Activated naive CD4-positive, alpha-beta T cell treated with anti-CD3 and anti-CD28 coated beads for 36 hours (primary cell): ENCODE measurements at regions of chr5 and their contacts with region 1.

Region 1: GRCh38 chr5:158695595-158696330 is 404.0 kb downstream of the EBF1 start:
- DNase-seq: peak; percentile 78
- H3K4me3 Mint-ChIP-seq: no peak overlapping the region
- H3K27ac Mint-ChIP-seq: no peak overlapping the region
- H3K4me1 Mint-ChIP-seq: peaks cover 2% of the 10 kb centered on the region
- H3K27me3 Mint-ChIP-seq: no peaks in the 10 kb centered on the region

Region 2: GRCh38 chr5:158174918-158175851 is 520.6 kb before region 1 on chr5:
- CTCF ChIA-PET with region 1: interaction called, 12 read pairs
- intact Hi-C with region 1: loop called (anchors 1 kb)
- DNase-seq: peak; percentile 75
- H3K4me3 Mint-ChIP-seq: no peak overlapping the region
- H3K27ac Mint-ChIP-seq: no peak overlapping the region
- H3K4me1 Mint-ChIP-seq: no peaks in the 10 kb centered on the region
- H3K27me3 Mint-ChIP-seq: no peaks in the 10 kb centered on the region

Region 3: DNA sequence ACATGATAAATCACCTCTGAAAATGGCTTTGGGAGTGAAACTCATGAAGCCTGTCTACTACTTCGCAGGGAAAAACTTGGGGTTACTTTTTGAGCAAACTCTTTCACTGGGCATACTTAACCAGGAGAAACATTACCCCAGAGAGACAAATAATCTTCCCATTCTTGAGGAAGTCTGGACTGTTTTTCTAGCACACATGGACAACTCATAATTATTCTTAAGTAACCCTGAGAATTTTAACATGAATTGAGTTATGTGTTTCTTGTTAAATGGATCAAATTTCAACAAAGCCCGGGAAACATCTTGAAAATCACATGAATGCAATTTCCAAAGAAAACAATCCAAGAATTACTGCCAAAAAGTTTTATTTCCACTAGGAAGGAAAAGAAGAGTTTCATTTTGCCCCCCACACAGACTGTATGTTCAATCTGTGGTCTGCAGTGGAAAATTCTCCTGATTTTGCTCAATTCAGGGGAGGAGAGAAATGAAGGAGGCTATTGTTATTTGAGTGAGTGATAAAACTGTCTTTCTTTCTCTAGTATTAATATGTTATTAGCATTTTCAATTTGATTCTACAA is 272.1 kb before region 1 on chr5:
- CTCF ChIA-PET with region 1: no interaction called
- intact Hi-C with region 1: no loop called
- DNase-seq: no peak
- H3K4me3 Mint-ChIP-seq: no peak overlapping the region
- H3K27ac Mint-ChIP-seq: no peak overlapping the region
- H3K4me1 Mint-ChIP-seq: no peaks in the 10 kb centered on the region
- H3K27me3 Mint-ChIP-seq: no peaks in the 10 kb centered on the region

Region 4: DNA sequence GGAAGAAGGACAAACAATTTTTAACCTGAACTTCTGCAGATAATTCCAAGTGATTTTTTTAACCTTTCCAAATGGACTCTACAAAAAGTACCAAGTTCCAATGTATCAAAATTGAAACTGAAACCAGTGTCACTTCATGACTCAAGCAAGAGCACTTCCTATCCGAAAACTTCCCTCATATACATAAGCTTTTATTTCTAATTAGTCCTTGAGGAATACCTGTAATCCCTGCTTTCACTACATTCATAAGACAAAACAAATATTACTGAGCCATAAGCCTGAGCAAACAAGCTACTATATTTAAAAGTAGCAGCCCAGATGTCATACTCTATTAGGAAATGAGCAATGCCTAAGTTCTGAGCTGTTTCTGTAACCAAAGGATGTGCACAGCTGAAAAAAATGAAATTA is 179.5 kb after region 1 on chr5:
- CTCF ChIA-PET with region 1: interaction called, 3 read pairs
- intact Hi-C with region 1: loop called (anchors 5 kb)
- DNase-seq: no peak
- H3K4me3 Mint-ChIP-seq: no peak overlapping the region
- H3K27ac Mint-ChIP-seq: no peak overlapping the region
- H3K4me1 Mint-ChIP-seq: peaks cover 29% of the 10 kb centered on the region
- H3K27me3 Mint-ChIP-seq: no peaks in the 10 kb centered on the region

Region 5: DNA sequence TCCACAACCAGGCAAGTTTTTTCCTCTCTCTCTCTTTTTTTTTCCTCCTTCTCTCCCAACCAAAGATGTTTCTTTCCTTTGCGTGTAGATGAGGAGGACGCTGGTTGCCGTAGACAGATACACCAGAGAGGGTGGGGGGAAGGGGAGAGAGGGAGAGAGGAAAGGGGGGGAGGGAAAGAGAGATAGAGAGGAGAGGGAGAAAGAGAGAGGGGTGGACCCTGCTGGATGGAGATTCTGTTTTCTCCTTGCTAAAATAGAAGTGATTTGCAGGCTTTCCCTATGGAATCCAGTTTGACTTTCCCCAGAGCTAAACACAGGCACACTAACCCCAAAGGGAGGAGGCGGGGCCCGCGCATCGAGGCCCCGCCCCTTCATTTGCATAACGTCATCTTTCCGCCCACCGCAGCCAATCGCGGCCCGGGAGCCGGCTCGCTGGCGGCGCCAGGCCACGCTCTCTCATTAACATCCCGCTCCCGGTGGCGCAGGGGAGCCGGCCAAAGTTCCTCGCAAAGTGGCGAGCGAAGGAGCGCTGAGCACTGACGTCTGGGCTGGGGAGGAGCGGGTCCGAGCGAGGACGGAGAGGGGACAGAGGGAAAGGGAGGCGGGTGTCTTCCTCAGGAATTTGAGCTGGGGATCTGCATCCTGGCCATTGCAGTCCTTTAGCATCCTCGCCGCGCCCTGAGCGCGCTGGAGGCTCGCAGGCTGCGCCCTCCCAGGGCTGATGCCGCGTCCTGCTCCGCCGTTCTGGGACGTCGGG is 404.4 kb after region 1 on chr5:
- CTCF ChIA-PET with region 1: interaction called, 120 read pairs
- intact Hi-C with region 1: no loop called
- DNase-seq: peak; percentile 85
- H3K4me3 Mint-ChIP-seq: peak overlapping the region; percentile 85
- H3K27ac Mint-ChIP-seq: peak overlapping the region; percentile 55
- H3K4me1 Mint-ChIP-seq: peaks cover 34% of the 10 kb centered on the region
- H3K27me3 Mint-ChIP-seq: peaks cover 58% of the 10 kb centered on the region

Region 6: DNA sequence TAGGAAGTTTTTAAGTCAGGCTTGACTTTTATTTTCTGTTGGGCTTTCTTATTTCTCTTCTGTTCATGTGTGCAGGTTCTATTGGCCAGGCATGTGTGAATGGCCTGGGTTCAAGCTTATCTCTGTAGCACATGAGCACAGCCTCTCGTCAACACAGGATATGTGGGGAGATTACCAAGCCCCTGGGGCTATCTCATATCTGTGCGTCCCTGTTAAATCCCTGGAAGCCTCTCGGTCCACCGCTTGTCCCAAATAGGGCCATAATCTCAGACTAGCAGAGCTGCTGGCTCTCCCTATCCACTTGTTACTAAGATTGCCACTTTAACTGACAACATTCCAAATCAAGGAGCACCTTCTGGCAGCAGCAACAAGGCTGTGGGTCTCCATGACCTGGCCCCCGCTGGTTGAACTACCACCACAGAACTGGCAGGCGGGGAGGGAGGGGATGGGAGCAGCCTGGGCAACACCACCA is 432.3 kb after region 1 on chr5:
- CTCF ChIA-PET with region 1: interaction called, 26 read pairs
- intact Hi-C with region 1: loop called (anchors 1 kb)
- DNase-seq: no peak
- H3K4me3 Mint-ChIP-seq: no peak overlapping the region
- H3K27ac Mint-ChIP-seq: no peak overlapping the region
- H3K4me1 Mint-ChIP-seq: peaks cover 6% of the 10 kb centered on the region
- H3K27me3 Mint-ChIP-seq: no peaks in the 10 kb centered on the region

Region 7: GRCh38 chr5:159316519-159317383 is 621.0 kb after region 1 on chr5:
- CTCF ChIA-PET with region 1: no interaction called
- intact Hi-C with region 1: loop called (anchors 2 kb)
- DNase-seq: peak; percentile 73
- H3K4me3 Mint-ChIP-seq: no peak overlapping the region
- H3K27ac Mint-ChIP-seq: no peak overlapping the region
- H3K4me1 Mint-ChIP-seq: no peaks in the 10 kb centered on the region
- H3K27me3 Mint-ChIP-seq: no peaks in the 10 kb centered on the region